CD4-positive, alpha-beta memory T cell (primary cell): ENCODE measurements at regions of chr14 and their contacts with region 1.

Region 1: GRCh38 chr14:24215495-24216344 is at the start of gene MDP1:
- DNase-seq: peak; percentile 86 to 92 (median 88)
- H3K4me3 ChIP-seq: peak within 1 kb of the TSS; percentile 94 to 95
- H3K4me3 Mint-ChIP-seq: peak within 1 kb of the TSS; percentile 90 to 97 (median 93)
- H3K27ac ChIP-seq: peak within 1 kb of the TSS; percentile 100
- H3K27ac Mint-ChIP-seq: peak within 1 kb of the TSS; percentile 95 to 100 (median 99)
- H3K4me1 ChIP-seq: peaks cover 42% of the 10 kb centered on the region
- H3K4me1 Mint-ChIP-seq: peaks cover 30 to 56% (median 44%) of the 10 kb centered on the region in 4 donors
- H3K27me3 ChIP-seq: no peaks in the 10 kb centered on the region
- H3K27me3 Mint-ChIP-seq: no peaks in the 10 kb centered on the region
- total RNA-seq, gene MDP1: 12.5 to 15.3 TPM

Region 2: DNA sequence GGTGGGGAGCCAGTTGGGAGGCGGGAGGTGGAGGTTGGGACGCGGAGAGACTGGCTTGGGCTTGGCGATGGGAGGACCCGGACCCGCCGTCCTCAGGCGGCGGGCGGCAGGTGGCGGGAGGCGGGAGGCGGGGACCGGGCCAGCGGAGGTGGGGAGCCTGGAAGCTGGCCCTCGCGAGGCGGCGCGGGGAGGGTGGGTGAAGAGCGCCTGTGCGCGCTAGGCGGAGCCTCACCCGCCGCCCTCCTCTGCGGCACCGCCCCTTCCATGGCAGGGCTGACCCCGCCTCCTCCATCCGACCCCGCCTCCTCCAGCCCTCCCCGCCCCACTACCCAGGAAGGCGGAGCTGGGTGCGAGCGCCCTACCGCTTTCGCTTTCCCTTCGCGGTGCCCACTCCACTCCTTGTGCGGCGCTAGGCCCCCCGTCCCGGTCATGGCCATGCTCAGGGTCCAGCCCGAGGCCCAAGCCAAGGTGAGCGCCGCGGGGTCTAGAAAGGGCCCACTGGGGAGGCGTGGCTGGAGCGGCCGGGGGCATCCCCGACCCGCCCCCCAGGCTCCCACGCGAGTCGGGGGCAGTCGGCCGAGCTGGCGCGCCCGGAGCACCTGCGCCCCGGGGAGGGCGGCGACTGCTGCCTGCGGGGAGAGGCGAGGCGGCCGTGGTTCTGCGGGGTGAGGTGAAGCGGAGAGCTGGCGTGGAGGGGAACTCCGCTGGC is 79.7 kb before region 1 on chr14 and contains the start of gene PSME1:
- CTCF ChIA-PET with region 1: no interaction called
- POLR2A ChIA-PET with region 1: interaction called, 18 read pairs
- intact Hi-C with region 1: loop called (anchors 1 kb)
- DNase-seq: peak; percentile 92 to 94 (median 93)
- H3K4me3 ChIP-seq: peak within 1 kb of the TSS; percentile 30 to 87
- H3K4me3 Mint-ChIP-seq: peak within 1 kb of the TSS; percentile 87 to 94 (median 92)
- H3K27ac ChIP-seq: peak within 1 kb of the TSS; percentile 84
- H3K27ac Mint-ChIP-seq: peak within 1 kb of the TSS; percentile 88 to 96 (median 94)
- H3K4me1 ChIP-seq: peaks cover 59% of the 10 kb centered on the region
- H3K4me1 Mint-ChIP-seq: peaks cover 35 to 70% (median 55%) of the 10 kb centered on the region in 4 donors
- H3K27me3 ChIP-seq: no peaks in the 10 kb centered on the region
- H3K27me3 Mint-ChIP-seq: no peaks in the 10 kb centered on the region
- total RNA-seq, gene PSME1: 257 to 273 TPM

Region 3: GRCh38 chr14:24160850-24161804 is 54.6 kb before region 1 on chr14 and contains the start of gene IRF9:
- CTCF ChIA-PET with region 1: interaction called, 10 read pairs
- POLR2A ChIA-PET with region 1: interaction called, 29 read pairs
- intact Hi-C with region 1: loop called (anchors 1 kb)
- DNase-seq: peak; percentile 94 to 97 (median 95)
- H3K4me3 ChIP-seq: peak within 1 kb of the TSS; percentile 73 to 97
- H3K4me3 Mint-ChIP-seq: peak within 1 kb of the TSS; percentile 96 to 100 (median 99)
- H3K27ac ChIP-seq: peak within 1 kb of the TSS; percentile 90
- H3K27ac Mint-ChIP-seq: peak within 1 kb of the TSS; percentile 97 to 100 (median 99)
- H3K4me1 ChIP-seq: peaks cover 50% of the 10 kb centered on the region
- H3K4me1 Mint-ChIP-seq: peaks cover 29 to 60% (median 48%) of the 10 kb centered on the region in 4 donors
- H3K27me3 ChIP-seq: no peaks in the 10 kb centered on the region
- H3K27me3 Mint-ChIP-seq: no peaks in the 10 kb centered on the region
- total RNA-seq, gene IRF9: 154 to 157 TPM

Region 4: GRCh38 chr14:24195191-24196070 is 20.3 kb before region 1 on chr14 and contains the start of gene TM9SF1:
- CTCF ChIA-PET with region 1: interaction called, 23 read pairs
- POLR2A ChIA-PET with region 1: interaction called, 107 read pairs
- intact Hi-C with region 1: loop called (anchors 1 kb)
- DNase-seq: peak; percentile 89 to 92 (median 92)
- H3K4me3 ChIP-seq: peak within 1 kb of the TSS; percentile 87 to 90
- H3K4me3 Mint-ChIP-seq: peak within 1 kb of the TSS; percentile 93 to 98 (median 94)
- H3K27ac ChIP-seq: peak within 1 kb of the TSS; percentile 98
- H3K27ac Mint-ChIP-seq: peak within 1 kb of the TSS; percentile 92 to 99 (median 98)
- H3K4me1 ChIP-seq: peaks cover 37% of the 10 kb centered on the region
- H3K4me1 Mint-ChIP-seq: peaks cover 31 to 65% (median 48%) of the 10 kb centered on the region in 4 donors
- H3K27me3 ChIP-seq: no peaks in the 10 kb centered on the region
- H3K27me3 Mint-ChIP-seq: no peaks in the 10 kb centered on the region
- total RNA-seq, gene TM9SF1: 24.1 to 26.3 TPM

Region 5: GRCh38 chr14:24299255-24300195 is 83.8 kb after region 1 on chr14 and contains the starts of genes DHRS1 and NOP9:
- CTCF ChIA-PET with region 1: interaction called, 19 read pairs
- POLR2A ChIA-PET with region 1: interaction called, 52 read pairs
- intact Hi-C with region 1: loop called (anchors 1 kb)
- DNase-seq: peak; percentile 89 to 92 (median 90)
- H3K4me3 ChIP-seq: peak within 1 kb of the TSS; percentile 77 to 85
- H3K4me3 Mint-ChIP-seq: peak within 1 kb of the TSS; percentile 91 to 99 (median 94)
- H3K27ac ChIP-seq: peak within 1 kb of the TSS; percentile 87
- H3K27ac Mint-ChIP-seq: peak within 1 kb of the TSS; percentile 96 to 99 (median 98)
- H3K4me1 ChIP-seq: peaks cover 42% of the 10 kb centered on the region
- H3K4me1 Mint-ChIP-seq: peaks cover 32 to 66% (median 51%) of the 10 kb centered on the region in 4 donors
- H3K27me3 ChIP-seq: no peaks in the 10 kb centered on the region
- H3K27me3 Mint-ChIP-seq: no peaks in the 10 kb centered on the region
- total RNA-seq, gene DHRS1: 37.6 to 38.6 TPM
- total RNA-seq, gene NOP9: 23.1 to 28.1 TPM

Region 6: GRCh38 chr14:24442273-24443052 is 226.7 kb after region 1 on chr14 and contains the start of gene SDR39U1:
- CTCF ChIA-PET with region 1: interaction called, 3 read pairs
- POLR2A ChIA-PET with region 1: interaction called, 15 read pairs
- intact Hi-C with region 1: loop called (anchors 1 kb)
- DNase-seq: peak; percentile 95 to 99 (median 98)
- H3K4me3 ChIP-seq: peak within 1 kb of the TSS; percentile 73 to 85
- H3K4me3 Mint-ChIP-seq: peak within 1 kb of the TSS; percentile 87 to 97 (median 92)
- H3K27ac ChIP-seq: peak within 1 kb of the TSS; percentile 93
- H3K27ac Mint-ChIP-seq: peak within 1 kb of the TSS; percentile 93 to 99 (median 99)
- H3K4me1 ChIP-seq: peaks cover 27% of the 10 kb centered on the region
- H3K4me1 Mint-ChIP-seq: peaks cover 20 to 57% (median 41%) of the 10 kb centered on the region in 4 donors
- H3K27me3 ChIP-seq: no peaks in the 10 kb centered on the region
- H3K27me3 Mint-ChIP-seq: no peaks in the 10 kb centered on the region
- total RNA-seq, gene SDR39U1: 102 to 109 TPM